ENCODE measurements at regions of chr11 and their contacts with region 1.

Region 1: GRCh38 chr11:57358543-57358961 is 20.4 kb downstream of the P2RX3 start:
- DNase-seq: no peak
- CTCF ChIP-seq: no peak

Region 2: DNA sequence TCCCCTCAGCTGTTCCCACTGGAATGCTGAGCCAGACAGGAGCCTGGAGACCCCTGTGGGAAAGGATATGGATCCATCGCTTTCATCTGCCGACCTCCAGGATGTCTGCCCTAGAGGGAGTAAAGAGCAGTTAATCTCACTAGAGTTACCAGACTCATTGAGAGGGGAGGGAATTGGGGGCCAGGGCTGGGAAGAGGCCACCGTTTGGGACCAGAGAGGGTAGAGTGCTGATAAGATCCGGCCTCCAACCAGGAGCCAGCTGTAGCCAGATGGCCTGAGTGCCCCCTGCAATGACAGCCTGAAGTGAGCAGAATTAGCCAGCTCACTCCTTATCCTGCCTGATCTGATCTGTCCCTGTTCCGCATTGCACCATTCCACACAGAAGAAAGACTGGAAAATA is 117.8 kb before region 1 on chr11:
- CTCF ChIA-PET with region 1: no interaction called
- POLR2A ChIA-PET with region 1: no interaction called
- DNase-seq: no peak
- CTCF ChIP-seq: no peak

Region 3: DNA sequence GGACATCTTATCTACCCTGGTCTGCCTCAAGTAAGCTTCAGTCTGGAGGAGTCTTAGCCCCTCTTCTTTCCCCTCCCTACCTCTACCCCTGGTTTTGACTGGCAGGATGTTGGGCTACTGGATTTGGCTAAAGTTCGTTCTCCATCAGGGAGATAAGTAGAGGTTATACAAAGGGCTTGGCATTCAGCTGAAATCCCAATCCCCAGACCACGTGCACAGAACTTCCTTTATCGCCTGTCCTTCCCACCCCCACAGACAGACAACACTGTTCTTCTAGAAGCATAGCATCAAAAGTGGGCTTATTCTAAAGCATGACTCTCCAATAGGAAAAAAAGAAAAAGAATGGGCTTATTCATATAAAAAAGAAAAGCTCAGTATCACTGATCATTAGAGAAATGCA is 14.6 kb after region 1 on chr11:
- CTCF ChIA-PET with region 1: interaction called, 10 read pairs
- POLR2A ChIA-PET with region 1: no interaction called
- DNase-seq: no peak
- CTCF ChIP-seq: no peak

Region 4: GRCh38 chr11:57390535-57390934 is 32.0 kb after region 1 on chr11 and contains the start of gene PRG2:
- CTCF ChIA-PET with region 1: no interaction called
- POLR2A ChIA-PET with region 1: no interaction called
- DNase-seq: no peak
- CTCF ChIP-seq: no peak

Measured in GM10248 (cell line).